Activated CD4-positive, alpha-beta memory T cell treated with anti-CD3 and anti-CD28 coated beads for 36 hours (primary cell): ENCODE measurements at regions of chr19 and their contacts with region 1.

Region 1: GRCh38 chr19:55301459-55302317 is 17.9 kb downstream of the BRSK1 start:
- DNase-seq: peak; percentile 95
- H3K4me3 Mint-ChIP-seq: peak overlapping the region; percentile 72
- H3K27ac Mint-ChIP-seq: peak overlapping the region; percentile 56
- H3K4me1 Mint-ChIP-seq: no peaks in the 10 kb centered on the region
- H3K27me3 Mint-ChIP-seq: no peaks in the 10 kb centered on the region

Region 2: GRCh38 chr19:55289117-55289796 is 12.4 kb before region 1 on chr19:
- CTCF ChIA-PET with region 1: interaction called, 34 read pairs
- POLR2A ChIA-PET with region 1: interaction called, 3 read pairs
- intact Hi-C with region 1: no loop called
- DNase-seq: no peak
- H3K4me3 Mint-ChIP-seq: no peak overlapping the region
- H3K27ac Mint-ChIP-seq: no peak overlapping the region
- H3K4me1 Mint-ChIP-seq: no peaks in the 10 kb centered on the region
- H3K27me3 Mint-ChIP-seq: no peaks in the 10 kb centered on the region

Region 3: GRCh38 chr19:55312621-55313512 is 11.2 kb after region 1 on chr19:
- CTCF ChIA-PET with region 1: interaction called, 13 read pairs
- POLR2A ChIA-PET with region 1: no interaction called
- intact Hi-C with region 1: no loop called
- DNase-seq: no peak
- H3K4me3 Mint-ChIP-seq: no peak overlapping the region
- H3K27ac Mint-ChIP-seq: no peak overlapping the region
- H3K4me1 Mint-ChIP-seq: no peaks in the 10 kb centered on the region
- H3K27me3 Mint-ChIP-seq: no peaks in the 10 kb centered on the region

Region 4: GRCh38 chr19:55319785-55320184 is 18.1 kb after region 1 on chr19:
- CTCF ChIA-PET with region 1: interaction called, 13 read pairs
- POLR2A ChIA-PET with region 1: no interaction called
- intact Hi-C with region 1: no loop called
- DNase-seq: no peak
- H3K4me3 Mint-ChIP-seq: no peak overlapping the region
- H3K27ac Mint-ChIP-seq: no peak overlapping the region
- H3K4me1 Mint-ChIP-seq: no peaks in the 10 kb centered on the region
- H3K27me3 Mint-ChIP-seq: peaks cover 9% of the 10 kb centered on the region

Region 5: DNA sequence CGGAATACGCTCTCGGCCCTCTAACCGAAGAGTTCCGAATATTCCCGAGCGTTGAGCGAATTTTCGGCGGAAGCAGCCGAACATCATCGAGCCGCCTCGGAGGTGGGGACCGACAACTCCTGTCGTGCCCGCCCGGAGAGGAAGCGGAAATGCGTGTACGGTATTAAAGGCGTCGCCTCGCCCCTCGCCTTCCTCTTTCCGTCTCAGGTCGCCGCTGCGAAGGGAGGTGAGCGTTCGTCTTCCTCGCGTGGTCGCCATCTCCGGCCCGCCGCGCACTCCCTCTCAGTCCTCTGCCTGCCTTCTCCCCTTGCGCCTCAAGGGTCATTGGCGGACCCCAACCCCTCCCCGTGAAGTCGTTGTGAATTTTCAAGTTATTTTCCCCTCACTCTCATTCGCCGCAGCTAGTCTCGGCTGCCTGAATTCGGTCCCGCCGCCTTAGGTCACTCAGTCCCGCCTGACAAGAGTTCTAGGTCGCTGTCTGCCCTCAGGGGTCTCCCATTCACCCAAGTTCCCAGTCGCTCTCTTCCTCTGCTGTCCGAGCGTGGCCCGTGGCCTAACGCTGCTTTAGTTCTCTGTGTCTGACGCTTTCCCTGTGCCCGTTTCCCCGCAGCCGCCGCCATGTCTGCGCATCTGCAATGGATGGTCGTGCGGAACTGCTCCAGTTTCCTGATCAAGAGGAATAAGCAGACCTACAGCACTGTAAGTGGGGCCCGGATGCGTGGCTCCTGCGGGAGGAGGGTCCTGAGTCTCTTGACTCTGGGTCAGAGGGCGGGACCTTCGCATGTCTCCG is 84.2 kb after region 1 on chr19 and contains the start of gene RPL28:
- CTCF ChIA-PET with region 1: interaction called, 43 read pairs
- POLR2A ChIA-PET with region 1: interaction called, 17 read pairs
- intact Hi-C with region 1: loop called (anchors 1 kb)
- DNase-seq: peak; percentile 99
- H3K4me3 Mint-ChIP-seq: peak within 1 kb of the TSS; percentile 96
- H3K27ac Mint-ChIP-seq: peak within 1 kb of the TSS; percentile 92
- H3K4me1 Mint-ChIP-seq: peaks cover 59% of the 10 kb centered on the region
- H3K27me3 Mint-ChIP-seq: no peaks in the 10 kb centered on the region
- total RNA-seq, gene RPL28: 2,630 to 2,642 TPM

Region 6: DNA sequence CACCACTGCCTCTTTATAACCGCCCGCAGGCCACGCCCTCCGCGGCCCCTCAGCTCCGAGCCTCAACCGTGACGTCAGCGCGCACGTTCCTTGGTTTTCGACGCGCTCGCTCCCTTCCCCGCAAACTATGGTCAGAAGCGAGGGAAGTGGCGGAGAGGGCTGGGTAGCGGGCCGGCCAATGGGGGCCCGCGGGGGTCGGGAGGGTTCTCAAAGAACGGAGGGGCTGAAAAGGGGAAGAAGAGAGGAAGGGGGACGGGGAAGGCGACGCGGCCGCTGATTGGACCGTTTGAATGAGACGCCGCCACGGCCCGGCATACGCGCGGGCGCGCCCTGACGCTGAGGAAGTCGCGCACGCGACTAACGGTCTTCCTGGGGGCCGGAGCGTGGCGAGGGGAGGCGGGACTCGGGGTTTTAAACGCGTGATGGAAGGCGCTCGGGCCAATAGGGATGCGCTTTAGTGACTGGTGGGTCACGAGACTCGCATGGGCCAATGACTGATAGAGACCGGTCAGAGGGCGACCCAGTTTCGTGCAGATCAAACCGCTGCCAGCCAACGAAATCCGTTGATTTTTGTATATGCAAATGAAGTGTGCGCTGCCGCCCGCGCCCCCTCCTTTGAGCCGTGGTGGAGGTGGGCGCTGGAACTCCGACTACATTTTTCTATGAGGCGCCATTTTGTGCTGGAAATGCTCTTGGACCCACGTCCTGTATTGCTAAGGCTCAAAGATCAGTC is 106.3 kb after region 1 on chr19:
- CTCF ChIA-PET with region 1: interaction called, 5 read pairs
- POLR2A ChIA-PET with region 1: interaction called, 10 read pairs
- intact Hi-C with region 1: no loop called
- DNase-seq: peak; percentile 98
- H3K4me3 Mint-ChIP-seq: peak overlapping the region; percentile 90
- H3K27ac Mint-ChIP-seq: peak overlapping the region; percentile 97
- H3K4me1 Mint-ChIP-seq: peaks cover 26% of the 10 kb centered on the region
- H3K27me3 Mint-ChIP-seq: no peaks in the 10 kb centered on the region

Region 7: GRCh38 chr19:55418185-55418584 is 116.5 kb after region 1 on chr19:
- CTCF ChIA-PET with region 1: interaction called, 14 read pairs
- POLR2A ChIA-PET with region 1: no interaction called
- intact Hi-C with region 1: no loop called
- DNase-seq: peak; percentile 62
- H3K4me3 Mint-ChIP-seq: no peak overlapping the region
- H3K27ac Mint-ChIP-seq: no peak overlapping the region
- H3K4me1 Mint-ChIP-seq: peaks cover 18% of the 10 kb centered on the region
- H3K27me3 Mint-ChIP-seq: no peaks in the 10 kb centered on the region